ENCODE measurements at regions of chr10 and their contacts with region 1.

Region 1: GRCh38 chr10:59906417-59907202 is at the start of gene CCDC6:
- DNase-seq: peak; percentile 86 to 93 (median 88)
- ATAC-seq: peak; percentile 91
- H3K4me3 ChIP-seq: peak within 1 kb of the TSS; percentile 86
- H3K27ac ChIP-seq: peak within 1 kb of the TSS; percentile 80
- H3K4me1 ChIP-seq: peaks cover 19 to 34% of the 10 kb centered on the region in 2 experiments
- H3K27me3 ChIP-seq: no peaks in the 10 kb centered on the region
- CTCF ChIP-seq: peak; percentile 59 to 89 (median 84)
- EP300 ChIP-seq: 0 out of 2 replicates have a peak, but pooled peaks have one; percentile 3
- POLR2A ChIP-seq: peak; percentile 84
- RAD21 ChIP-seq: peak; percentile 44 to 71; a peak in 3 of 4 replicates
- polyA plus RNA-seq, gene CCDC6: 10.4 to 12.7 TPM

Region 2: GRCh38 chr10:59830601-59831259 is 75.9 kb before region 1 on chr10:
- CTCF ChIA-PET with region 1: interaction called, 7 read pairs
- POLR2A ChIA-PET with region 1: interaction called, 3 read pairs
- in situ Hi-C with region 1: no loop called
- intact Hi-C with region 1: loop called (anchors 2 kb)
- DNase-seq: peak; percentile 70 to 77 (median 74)
- ATAC-seq: peak; percentile 92
- H3K4me3 ChIP-seq: no peak overlapping the region
- H3K27ac ChIP-seq: no peak overlapping the region
- H3K4me1 ChIP-seq: peaks cover 0 to 13% of the 10 kb centered on the region in 2 experiments; a peak in 4 of 5 replicates
- H3K27me3 ChIP-seq: no peaks in the 10 kb centered on the region
- CTCF ChIP-seq: peak; percentile 72 to 83 (median 76)
- EP300 ChIP-seq: no peak
- POLR2A ChIP-seq: no peak
- RAD21 ChIP-seq: peak; percentile 70 to 75

Region 3: GRCh38 chr10:59865101-59865500 is 41.5 kb before region 1 on chr10:
- CTCF ChIA-PET with region 1: interaction called, 8 read pairs
- POLR2A ChIA-PET with region 1: interaction called, 3 read pairs
- in situ Hi-C with region 1: no loop called
- intact Hi-C with region 1: loop called (anchors 1 kb)
- DNase-seq: peak; percentile 55 to 70 (median 58)
- ATAC-seq: peak; percentile 89
- H3K4me3 ChIP-seq: no peak overlapping the region
- H3K27ac ChIP-seq: no peak overlapping the region
- H3K4me1 ChIP-seq: peaks cover 3 to 25% of the 10 kb centered on the region in 2 experiments; a peak in 3 of 5 replicates
- H3K27me3 ChIP-seq: no peaks in the 10 kb centered on the region
- CTCF ChIP-seq: peak; percentile 63 to 88 (median 64)
- EP300 ChIP-seq: no peak
- POLR2A ChIP-seq: no peak
- RAD21 ChIP-seq: peak; percentile 73 to 90

Region 4: GRCh38 chr10:59880971-59881510 is 25.6 kb before region 1 on chr10:
- CTCF ChIA-PET with region 1: interaction called, 4 read pairs
- POLR2A ChIA-PET with region 1: interaction called, 7 read pairs
- in situ Hi-C with region 1: no loop called
- intact Hi-C with region 1: loop called (anchors 1 kb)
- DNase-seq: peak; percentile 54 to 90 (median 69)
- ATAC-seq: peak; percentile 91
- H3K4me3 ChIP-seq: no peak overlapping the region
- H3K27ac ChIP-seq: peak overlapping the region; percentile 72
- H3K4me1 ChIP-seq: peaks cover 12 to 61% of the 10 kb centered on the region in 2 experiments
- H3K27me3 ChIP-seq: no peaks in the 10 kb centered on the region
- CTCF ChIP-seq: no peak
- EP300 ChIP-seq: peak; percentile 43; the same call in 1 of the 2 replicates
- POLR2A ChIP-seq: no peak
- RAD21 ChIP-seq: no peak

Region 5: DNA sequence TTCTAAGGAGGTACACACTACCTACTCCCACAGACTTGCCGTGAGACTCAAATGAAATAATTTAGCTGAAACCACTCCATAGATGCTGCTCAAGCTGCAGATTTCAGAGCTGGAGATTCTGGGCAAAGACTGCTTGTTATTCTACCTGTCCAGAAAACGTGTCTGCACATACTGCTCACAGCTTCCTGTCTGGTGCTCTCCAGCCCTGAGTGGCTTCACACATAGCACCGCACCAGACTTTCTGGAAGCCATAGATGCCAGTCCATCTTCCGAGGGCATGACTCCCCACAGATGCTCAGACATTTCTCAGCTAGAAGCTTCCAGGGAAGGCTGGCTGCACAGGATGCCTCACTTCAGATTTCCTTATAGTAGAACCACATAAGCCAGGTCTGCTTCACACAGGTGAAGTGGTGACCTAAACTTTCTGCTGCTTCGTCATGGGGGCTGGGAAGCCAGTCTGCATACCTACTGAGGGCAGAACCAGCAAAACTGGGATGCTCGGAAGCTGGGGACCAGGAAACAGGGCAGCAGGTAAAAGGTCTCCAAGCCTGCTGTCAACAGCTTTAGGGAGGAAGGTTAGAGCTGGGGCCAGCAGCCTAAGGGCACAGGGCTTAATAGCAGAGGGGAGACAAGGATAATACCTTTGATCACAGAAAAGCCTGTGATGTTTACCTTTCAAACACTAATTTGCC is 18.5 kb before region 1 on chr10:
- CTCF ChIA-PET with region 1: no interaction called
- POLR2A ChIA-PET with region 1: interaction called, 35 read pairs
- in situ Hi-C with region 1: no loop called
- intact Hi-C with region 1: no loop called
- DNase-seq: no peak
- ATAC-seq: no peak
- H3K4me3 ChIP-seq: no peak overlapping the region
- H3K27ac ChIP-seq: no peak overlapping the region
- H3K4me1 ChIP-seq: peaks cover 9 to 50% of the 10 kb centered on the region in 2 experiments
- H3K27me3 ChIP-seq: no peaks in the 10 kb centered on the region
- CTCF ChIP-seq: no peak
- EP300 ChIP-seq: no peak
- POLR2A ChIP-seq: no peak
- RAD21 ChIP-seq: no peak

Region 6: GRCh38 chr10:59894114-59894513 is 12.5 kb before region 1 on chr10:
- CTCF ChIA-PET with region 1: interaction called, 3 read pairs
- POLR2A ChIA-PET with region 1: interaction called, 35 read pairs
- in situ Hi-C with region 1: no loop called
- intact Hi-C with region 1: no loop called
- DNase-seq: no peak
- ATAC-seq: no peak
- H3K4me3 ChIP-seq: no peak overlapping the region
- H3K27ac ChIP-seq: no peak overlapping the region
- H3K4me1 ChIP-seq: peaks cover 13 to 53% of the 10 kb centered on the region in 2 experiments
- H3K27me3 ChIP-seq: no peaks in the 10 kb centered on the region
- CTCF ChIP-seq: no peak
- EP300 ChIP-seq: no peak
- POLR2A ChIP-seq: no peak
- RAD21 ChIP-seq: no peak

Region 7: GRCh38 chr10:59917922-59918321 is 11.3 kb after region 1 on chr10:
- CTCF ChIA-PET with region 1: no interaction called
- POLR2A ChIA-PET with region 1: no interaction called
- in situ Hi-C with region 1: no loop called
- intact Hi-C with region 1: no loop called
- DNase-seq: no peak
- ATAC-seq: no peak
- H3K4me3 ChIP-seq: no peak overlapping the region
- H3K27ac ChIP-seq: no peak overlapping the region
- H3K4me1 ChIP-seq: no peaks in the 10 kb centered on the region
- H3K27me3 ChIP-seq: no peaks in the 10 kb centered on the region
- CTCF ChIP-seq: no peak
- EP300 ChIP-seq: no peak
- POLR2A ChIP-seq: no peak
- RAD21 ChIP-seq: no peak

Region 8: GRCh38 chr10:59976909-59977308 is 70.3 kb after region 1 on chr10:
- CTCF ChIA-PET with region 1: no interaction called
- POLR2A ChIA-PET with region 1: no interaction called
- in situ Hi-C with region 1: no loop called
- intact Hi-C with region 1: no loop called
- DNase-seq: no peak
- ATAC-seq: no peak
- H3K4me3 ChIP-seq: no peak overlapping the region
- H3K27ac ChIP-seq: no peak overlapping the region
- H3K4me1 ChIP-seq: no peaks in the 10 kb centered on the region
- H3K27me3 ChIP-seq: no peaks in the 10 kb centered on the region
- CTCF ChIP-seq: no peak
- EP300 ChIP-seq: no peak
- POLR2A ChIP-seq: no peak
- RAD21 ChIP-seq: no peak

Region 9: DNA sequence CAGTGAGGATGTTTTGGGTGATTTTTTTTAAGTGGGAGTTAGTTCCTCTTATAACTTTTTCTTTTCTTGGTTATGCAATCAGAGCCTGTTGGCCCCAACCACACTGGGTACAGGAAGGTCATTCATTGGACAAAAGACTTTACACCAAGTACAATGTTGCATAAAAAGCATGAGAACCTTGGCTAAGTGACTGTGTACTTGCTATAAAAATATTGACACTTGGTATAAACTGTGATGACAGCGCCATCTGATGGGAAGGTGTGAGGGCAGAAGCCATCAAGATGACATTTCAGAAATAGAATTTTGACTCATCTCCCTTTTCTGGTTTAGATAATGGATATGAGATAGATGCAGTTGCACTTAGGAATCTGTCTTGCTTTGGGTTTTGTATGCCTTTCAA is 126.1 kb after region 1 on chr10:
- CTCF ChIA-PET with region 1: interaction called, 3 read pairs
- POLR2A ChIA-PET with region 1: interaction called, 6 read pairs
- in situ Hi-C with region 1: no loop called
- intact Hi-C with region 1: loop called (anchors 5 kb)
- DNase-seq: peak in 2 of 4 experiments; percentile 44 to 71
- ATAC-seq: peak; percentile 77
- H3K4me3 ChIP-seq: no peak overlapping the region
- H3K27ac ChIP-seq: no peak overlapping the region
- H3K4me1 ChIP-seq: peaks cover 3 to 15% of the 10 kb centered on the region in 2 experiments; a peak in 4 of 5 replicates
- H3K27me3 ChIP-seq: no peaks in the 10 kb centered on the region
- CTCF ChIP-seq: peak; percentile 57 to 85 (median 71); a peak in 5 of 6 replicates
- EP300 ChIP-seq: no peak
- POLR2A ChIP-seq: no peak
- RAD21 ChIP-seq: peak; percentile 86 to 92

Measured in K562 (cell line).